ENCODE measurements at regions of chr5 and their contacts with region 1.

Region 1: DNA sequence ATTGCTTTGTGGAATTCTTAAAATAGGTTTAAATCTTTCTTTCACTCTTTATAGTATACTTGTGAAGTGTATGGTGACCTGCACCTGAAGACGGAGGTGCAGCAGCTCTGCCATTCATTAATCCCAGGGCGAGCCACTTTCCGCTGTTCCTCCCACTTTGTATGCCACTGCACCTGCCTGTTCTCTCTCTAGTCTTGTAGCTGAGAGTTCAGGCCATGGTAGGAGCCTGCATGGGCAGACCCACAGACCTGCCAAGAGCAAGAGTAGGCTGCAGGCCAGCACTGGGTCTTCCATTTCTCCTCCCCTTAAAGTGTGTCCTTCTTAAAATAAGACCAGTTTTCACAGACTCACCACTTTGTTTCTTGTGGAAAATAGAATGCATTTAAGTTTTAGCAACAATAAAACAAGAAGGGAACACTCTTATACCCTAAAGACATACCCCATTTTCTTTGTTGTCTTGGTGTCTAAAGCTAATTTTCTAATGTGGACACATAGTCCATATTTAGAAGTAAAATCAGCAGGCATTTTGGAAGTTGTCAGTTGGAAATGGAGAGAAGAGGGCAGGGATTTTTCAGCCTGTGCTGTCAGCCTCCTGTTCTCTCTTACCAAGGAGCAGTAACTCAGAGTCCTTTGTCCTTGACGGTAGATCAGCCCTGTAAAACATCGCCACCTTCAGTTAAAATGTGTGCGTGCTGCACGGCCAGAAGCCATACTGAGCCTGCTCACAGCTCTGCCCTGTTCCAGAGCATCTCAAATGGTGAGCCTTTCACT is 103.2 kb downstream of the SNCAIP start:
- DNase-seq: peak; percentile 49
- ATAC-seq: peak; percentile 95

Region 2: DNA sequence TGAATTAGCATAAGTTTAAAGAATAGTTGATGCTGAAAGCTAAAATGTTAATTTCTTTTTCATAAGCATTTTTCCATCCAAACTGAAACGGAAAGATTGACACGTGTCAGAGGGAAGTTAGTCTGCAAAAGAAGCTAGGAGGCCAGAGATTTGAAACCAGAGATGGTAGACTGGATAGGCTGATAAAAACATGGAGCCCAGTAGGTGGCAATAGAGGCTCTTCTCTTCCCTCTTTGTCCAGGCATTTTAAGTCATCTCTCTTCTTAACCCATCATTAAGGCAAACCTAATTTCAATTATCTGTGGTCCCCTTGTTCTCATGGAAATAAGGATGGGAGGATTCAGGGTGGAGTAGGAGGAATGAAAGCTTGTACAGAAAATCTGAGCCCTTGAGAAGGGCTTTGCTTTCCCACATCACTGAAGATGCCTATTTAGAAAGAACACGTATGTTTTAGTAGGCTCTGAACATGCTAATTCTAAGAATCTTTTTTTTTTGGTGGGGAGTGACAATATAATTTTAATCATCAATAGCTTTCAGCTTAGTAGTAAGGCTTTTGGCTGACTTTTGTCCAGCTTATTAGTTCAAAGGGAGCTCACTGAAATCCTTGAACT is 219.3 kb before region 1 on chr5:
- intact Hi-C with region 1: loop called (anchors 5 kb)
- DNase-seq: no peak
- ATAC-seq: peak; percentile 73

Region 3: DNA sequence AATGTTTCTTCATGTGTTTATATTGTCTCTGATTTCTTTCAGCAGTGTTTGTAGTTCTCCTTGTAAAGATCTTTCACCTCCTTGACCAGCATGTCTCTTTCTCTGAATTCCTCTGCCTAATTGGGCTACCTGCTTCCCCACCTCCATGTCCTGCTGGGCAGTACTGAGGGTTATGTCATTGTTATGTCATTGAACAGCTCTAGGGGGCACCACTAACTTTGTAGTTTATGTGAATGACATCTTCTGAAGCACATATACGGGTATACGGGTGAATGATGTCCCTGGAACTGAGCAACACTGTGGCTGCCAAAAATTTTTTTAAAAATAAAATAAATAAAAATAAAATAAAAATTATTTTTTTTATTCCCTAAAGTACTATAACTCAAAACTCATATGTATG is 120.1 kb before region 1 on chr5:
- intact Hi-C with region 1: loop called (anchors 10 kb)
- DNase-seq: no peak
- ATAC-seq: no peak

Region 4: DNA sequence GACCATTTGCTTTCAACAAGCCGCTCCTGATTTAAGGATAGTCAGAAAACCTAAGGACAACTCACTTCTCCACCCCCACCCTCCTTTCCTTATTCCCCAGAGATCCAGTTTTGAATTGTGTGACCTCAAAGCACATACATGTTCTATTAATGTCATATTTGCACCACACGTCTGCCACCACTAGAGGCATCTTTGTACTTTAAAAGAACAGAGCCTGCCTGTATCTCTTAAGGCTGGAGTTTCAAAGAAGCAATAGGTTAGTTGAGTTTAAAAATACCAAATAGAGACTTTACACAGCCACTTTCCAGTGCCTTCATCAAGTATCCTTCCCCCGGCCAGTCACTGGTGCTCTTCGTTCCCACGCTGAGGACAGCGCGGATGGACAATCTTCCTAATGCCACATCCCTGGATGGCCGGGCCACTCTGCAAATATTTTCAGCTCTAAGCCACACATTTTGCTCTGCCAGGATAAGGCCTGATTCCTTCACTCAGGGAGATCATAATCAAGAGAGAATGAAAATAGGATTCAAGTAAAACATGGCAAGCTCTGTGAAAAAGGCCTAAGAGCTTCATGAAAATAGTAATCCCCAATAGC is 43.2 kb after region 1 on chr5:
- intact Hi-C with region 1: no loop called
- DNase-seq: no peak
- ATAC-seq: peak; percentile 62

Region 5: GRCh38 chr5:122756263-122756911 is 341.2 kb after region 1 on chr5:
- intact Hi-C with region 1: no loop called
- DNase-seq: no peak
- ATAC-seq: peak; percentile 82